GM12878 (cell line): ENCODE measurements at regions of chr13 and their contacts with region 1.

Region 1: DNA sequence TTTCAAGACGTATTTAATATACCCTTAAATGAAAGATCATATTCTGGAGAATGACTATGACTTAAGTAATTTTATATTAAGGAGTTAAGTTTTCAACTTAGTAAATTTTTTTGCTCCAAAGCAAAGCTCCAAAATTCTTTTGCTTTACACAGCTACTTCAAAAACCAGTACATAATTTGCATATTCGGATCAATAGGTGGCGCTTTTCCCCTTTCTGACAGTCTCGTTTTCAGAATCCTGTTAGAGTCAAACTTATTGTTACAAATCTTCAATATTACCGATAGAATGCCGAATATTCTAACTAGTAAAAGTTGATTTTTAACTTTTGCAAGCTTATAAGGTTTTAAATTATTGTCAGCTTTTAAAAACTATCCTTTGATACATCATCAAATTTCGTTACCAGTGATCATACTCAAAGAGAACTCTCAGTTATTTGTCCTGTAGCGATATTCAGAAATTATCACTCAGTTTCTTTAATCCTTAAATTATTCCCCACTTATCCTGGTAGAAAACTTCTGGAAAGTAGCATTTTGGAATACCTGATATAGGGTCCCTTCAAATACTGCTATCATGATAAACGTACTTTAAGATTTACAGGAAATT is 852.7 kb upstream of the KLHL1 start:
- DNase-seq: peak; percentile 3
- ATAC-seq: peak; percentile 58
- H3K4me3 ChIP-seq: no peak overlapping the region
- H3K27ac ChIP-seq: no peak overlapping the region
- H3K4me1 ChIP-seq: no peaks in the 10 kb centered on the region
- H3K27me3 ChIP-seq: no peaks in the 10 kb centered on the region
- CTCF ChIP-seq: peak; percentile 42 to 58 (median 53); a peak in 5 of 6 replicates
- EP300 ChIP-seq: no peak
- POLR2A ChIP-seq: no peak
- RAD21 ChIP-seq: peak; percentile 71

Region 2: DNA sequence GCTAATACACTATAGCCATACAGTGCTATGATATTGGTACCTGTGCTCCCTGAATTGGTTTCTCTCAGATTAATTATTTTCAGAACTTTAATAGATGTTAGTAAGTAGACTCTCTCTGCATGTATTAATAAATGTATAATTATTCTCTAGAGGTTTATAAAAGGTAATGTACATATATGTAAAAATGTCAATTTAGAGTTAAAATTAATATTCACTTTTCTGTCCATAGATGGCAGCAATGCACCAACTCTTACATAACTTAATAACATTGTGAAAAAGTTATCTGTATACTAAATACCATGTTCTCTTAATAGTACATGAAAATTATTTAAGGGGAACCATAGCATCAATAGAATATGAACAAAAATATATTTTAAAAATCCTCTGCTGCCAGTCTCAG is 337.7 kb before region 1 on chr13:
- CTCF ChIA-PET with region 1: interaction called, 3 read pairs
- POLR2A ChIA-PET with region 1: no interaction called
- RAD21 ChIA-PET with region 1: no interaction called
- SMC1A ChIA-PET with region 1: interaction called, 3 read pairs
- in situ Hi-C with region 1: no loop called
- intact Hi-C with region 1: loop called (anchors 5 kb)
- DNase-seq: no peak
- ATAC-seq: peak; percentile 51; the same call in 2 of the 3 replicates
- H3K4me3 ChIP-seq: no peak overlapping the region
- H3K27ac ChIP-seq: no peak overlapping the region
- H3K4me1 ChIP-seq: no peaks in the 10 kb centered on the region
- H3K27me3 ChIP-seq: no peaks in the 10 kb centered on the region
- CTCF ChIP-seq: peak in 1 of 3 experiments; percentile 23; a peak in 2 of 6 replicates
- EP300 ChIP-seq: no peak
- POLR2A ChIP-seq: no peak
- RAD21 ChIP-seq: peak; percentile 33; the same call in 1 of the 2 replicates

Region 3: DNA sequence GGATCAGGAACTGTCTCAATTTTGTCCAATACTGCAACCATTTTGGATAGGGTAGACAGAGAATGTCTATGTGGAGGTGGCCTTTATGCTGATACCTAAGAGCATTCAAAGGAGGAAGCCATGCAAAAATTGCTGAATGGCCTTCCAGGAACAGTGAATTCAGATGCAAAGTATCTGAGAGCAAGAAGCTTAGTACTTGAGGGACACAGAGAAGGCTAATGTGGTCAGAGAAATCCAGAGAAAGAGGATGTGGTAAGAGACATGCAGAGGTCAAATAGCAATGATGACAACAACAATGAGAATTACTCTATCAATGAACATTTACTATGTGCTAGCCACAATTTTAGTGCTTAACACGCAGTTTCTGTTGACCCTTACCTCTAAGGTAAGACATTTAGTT is 67.1 kb before region 1 on chr13:
- CTCF ChIA-PET with region 1: no interaction called
- POLR2A ChIA-PET with region 1: no interaction called
- RAD21 ChIA-PET with region 1: no interaction called
- SMC1A ChIA-PET with region 1: no interaction called
- in situ Hi-C with region 1: no loop called
- intact Hi-C with region 1: loop called (anchors 10 kb)
- DNase-seq: peak; percentile 7
- ATAC-seq: peak; percentile 60
- H3K4me3 ChIP-seq: no peak overlapping the region
- H3K27ac ChIP-seq: no peak overlapping the region
- H3K4me1 ChIP-seq: no peaks in the 10 kb centered on the region
- H3K27me3 ChIP-seq: no peaks in the 10 kb centered on the region
- CTCF ChIP-seq: no peak
- EP300 ChIP-seq: no peak
- POLR2A ChIP-seq: no peak
- RAD21 ChIP-seq: no peak

Region 4: GRCh38 chr13:70941454-70941853 is 19.5 kb before region 1 on chr13:
- CTCF ChIA-PET with region 1: interaction called, 10 read pairs
- POLR2A ChIA-PET with region 1: no interaction called
- RAD21 ChIA-PET with region 1: no interaction called
- SMC1A ChIA-PET with region 1: no interaction called
- in situ Hi-C with region 1: no loop called
- intact Hi-C with region 1: no loop called
- DNase-seq: no peak
- ATAC-seq: no peak
- H3K4me3 ChIP-seq: no peak overlapping the region
- H3K27ac ChIP-seq: no peak overlapping the region
- H3K4me1 ChIP-seq: no peaks in the 10 kb centered on the region
- H3K27me3 ChIP-seq: no peaks in the 10 kb centered on the region
- CTCF ChIP-seq: no peak
- EP300 ChIP-seq: no peak
- POLR2A ChIP-seq: no peak
- RAD21 ChIP-seq: no peak

Region 5: GRCh38 chr13:71218960-71219359 is 258.0 kb after region 1 on chr13:
- CTCF ChIA-PET with region 1: interaction called, 5 read pairs
- POLR2A ChIA-PET with region 1: no interaction called
- RAD21 ChIA-PET with region 1: no interaction called
- SMC1A ChIA-PET with region 1: no interaction called
- in situ Hi-C with region 1: no loop called
- intact Hi-C with region 1: loop called (anchors 1 kb)
- DNase-seq: no peak
- ATAC-seq: peak; percentile 57
- H3K4me3 ChIP-seq: no peak overlapping the region
- H3K27ac ChIP-seq: no peak overlapping the region
- H3K4me1 ChIP-seq: no peaks in the 10 kb centered on the region; the same call in 1 of the 2 replicates
- H3K27me3 ChIP-seq: no peaks in the 10 kb centered on the region
- CTCF ChIP-seq: peak; percentile 27 to 39 (median 35); a peak in 4 of 6 replicates
- EP300 ChIP-seq: no peak
- POLR2A ChIP-seq: no peak
- RAD21 ChIP-seq: peak; percentile 61